ENCODE measurements at regions of chr14 and their contacts with region 1.

Region 1: GRCh38 chr14:96275177-96276112 is 19.4 kb downstream of the BDKRB1 start:
- DNase-seq: peak; percentile 81
- ATAC-seq: peak; percentile 85

Region 2: GRCh38 chr14:96001866-96002497 is 273.5 kb before region 1 on chr14:
- intact Hi-C with region 1: loop called (anchors 10 kb)
- DNase-seq: no peak
- ATAC-seq: no peak

Region 3: GRCh38 chr14:96100161-96101029 is 175.1 kb before region 1 on chr14:
- intact Hi-C with region 1: loop called (anchors 5 kb)
- DNase-seq: peak; percentile 78
- ATAC-seq: peak; percentile 59

Measured in Right ventricle myocardium superior (tissue), 1 donor.